Endothelial cell of umbilical vein (primary cell): ENCODE measurements at regions of chr6 and their contacts with region 1.

Region 1: DNA sequence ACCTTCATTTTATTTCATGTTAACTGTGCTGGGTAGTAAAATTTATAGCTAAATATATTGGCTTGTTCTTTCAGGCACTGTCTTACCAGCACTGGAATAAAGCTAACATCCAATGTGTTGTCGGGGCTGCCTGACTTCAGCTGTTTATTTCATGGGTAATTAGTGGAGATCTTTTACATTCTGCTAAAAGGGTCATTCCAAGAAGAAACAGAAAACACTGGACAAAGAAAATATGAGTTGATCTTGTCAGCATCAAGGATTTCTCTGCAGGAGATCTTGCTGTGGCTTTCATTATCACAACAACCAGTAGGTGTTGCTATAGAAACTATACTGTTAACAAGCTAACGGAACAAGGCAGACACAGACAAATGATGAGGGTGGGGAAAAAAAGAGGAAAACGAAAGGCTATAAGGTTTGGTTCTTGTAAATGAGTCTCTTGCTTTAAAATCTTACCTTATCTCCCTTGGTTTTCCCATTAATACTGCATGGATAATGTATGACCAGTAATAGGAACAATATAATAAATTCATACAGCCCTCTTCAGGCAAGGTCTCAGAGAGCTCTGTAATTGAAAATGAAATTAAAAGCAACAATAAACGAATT is 206.8 kb downstream of the SIM1 start:
- DNase-seq: peak; percentile 75
- H3K4me3 ChIP-seq: peak overlapping the region in 2 of 3 experiments; percentile 7 to 50
- H3K27ac ChIP-seq: peak overlapping the region; percentile 50
- H3K4me1 ChIP-seq: peaks cover 12% of the 10 kb centered on the region
- H3K27me3 ChIP-seq: no peaks in the 10 kb centered on the region
- CTCF ChIP-seq: no peak
- POLR2A ChIP-seq: no peak

Region 2: DNA sequence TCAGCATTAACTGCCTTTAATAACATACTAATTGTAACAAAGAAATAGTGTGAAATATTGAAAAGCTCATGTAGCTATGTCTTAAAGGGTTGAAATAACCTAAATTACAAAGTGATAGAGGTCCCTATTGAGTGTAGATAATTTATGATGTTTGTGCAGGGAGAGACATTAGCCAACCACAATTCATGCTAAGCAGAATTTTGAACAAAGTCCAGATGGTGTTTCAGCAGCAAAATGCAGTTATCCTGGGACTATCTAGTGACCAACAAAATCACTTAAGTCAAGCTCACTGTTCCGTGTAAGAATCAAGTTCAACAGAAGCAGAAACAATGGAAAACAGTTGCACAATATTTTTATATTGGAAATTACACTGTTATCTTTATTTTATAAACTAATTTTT is 11.7 kb before region 1 on chr6:
- CTCF ChIA-PET with region 1: interaction called, 12 read pairs
- POLR2A ChIA-PET with region 1: no interaction called
- dilution Hi-C with region 1: no loop called
- intact Hi-C with region 1: no loop called
- DNase-seq: no peak
- H3K4me3 ChIP-seq: no peak overlapping the region
- H3K27ac ChIP-seq: no peak overlapping the region
- H3K4me1 ChIP-seq: no peaks in the 10 kb centered on the region
- H3K27me3 ChIP-seq: no peaks in the 10 kb centered on the region
- CTCF ChIP-seq: no peak
- POLR2A ChIP-seq: no peak

Region 3: GRCh38 chr6:100283283-100283682 is 25.4 kb after region 1 on chr6:
- CTCF ChIA-PET with region 1: interaction called, 10 read pairs
- POLR2A ChIA-PET with region 1: no interaction called
- dilution Hi-C with region 1: no loop called
- intact Hi-C with region 1: no loop called
- DNase-seq: no peak
- H3K4me3 ChIP-seq: no peak overlapping the region
- H3K27ac ChIP-seq: no peak overlapping the region
- H3K4me1 ChIP-seq: peaks cover 13% of the 10 kb centered on the region
- H3K27me3 ChIP-seq: no peaks in the 10 kb centered on the region
- CTCF ChIP-seq: no peak
- POLR2A ChIP-seq: no peak